PC-3 (cell line): ENCODE measurements at regions of chr12 and their contacts with region 1.

Region 1: GRCh38 chr12:32755654-32756475 is at the start of gene YARS2:
- DNase-seq: peak; percentile 96
- ATAC-seq: peak; percentile 80
- H3K4me3 ChIP-seq: peak within 1 kb of the TSS; percentile 93
- H3K27ac ChIP-seq: peak within 1 kb of the TSS; percentile 85
- H3K4me1 ChIP-seq: peaks cover 22% of the 10 kb centered on the region
- H3K27me3 ChIP-seq: no peaks in the 10 kb centered on the region
- CTCF ChIP-seq: peak; percentile 86
- total RNA-seq, gene YARS2: 31.4 and 37.4 TPM in 2 replicates

Region 2: GRCh38 chr12:31659087-31659933 is 1096.6 kb before region 1 on chr12 and contains the start of gene ETFBKMT:
- CTCF ChIA-PET with region 1: no interaction called
- POLR2A ChIA-PET with region 1: no interaction called
- intact Hi-C with region 1: loop called (anchors 10 kb)
- DNase-seq: peak; percentile 93
- ATAC-seq: peak; percentile 99
- H3K4me3 ChIP-seq: peak within 1 kb of the TSS; percentile 100
- H3K27ac ChIP-seq: peak within 1 kb of the TSS; percentile 72
- H3K4me1 ChIP-seq: peaks cover 8% of the 10 kb centered on the region
- H3K27me3 ChIP-seq: no peaks in the 10 kb centered on the region
- CTCF ChIP-seq: peak; percentile 21; the same call in 1 of the 2 replicates
- total RNA-seq, gene ETFBKMT: 0.52 and 0.58 TPM in 2 replicates

Region 3: DNA sequence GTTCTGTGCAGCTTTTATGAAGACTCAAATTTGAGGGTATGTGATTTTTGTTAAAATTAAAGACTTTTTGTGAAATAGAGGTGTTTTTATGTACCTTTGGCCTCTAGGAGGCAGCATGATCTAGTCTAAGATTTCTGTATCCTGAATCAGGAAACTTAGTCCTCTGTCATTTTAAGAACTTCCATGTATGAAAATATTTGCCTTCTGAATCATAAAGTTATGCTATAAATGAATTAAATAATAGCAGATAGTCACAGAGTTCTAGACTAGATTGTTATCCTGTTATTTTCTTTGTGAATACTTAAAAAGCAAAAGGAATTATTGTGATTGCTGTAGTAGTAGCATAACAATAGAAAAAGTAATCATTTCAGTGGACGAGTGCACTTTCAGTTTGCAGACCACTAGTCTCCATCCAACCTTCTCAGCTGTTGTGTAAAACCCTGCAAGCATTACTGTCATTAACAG is 300.2 kb before region 1 on chr12:
- CTCF ChIA-PET with region 1: no interaction called
- POLR2A ChIA-PET with region 1: no interaction called
- intact Hi-C with region 1: loop called (anchors 1 kb)
- DNase-seq: peak; percentile 81
- ATAC-seq: peak; percentile 66
- H3K4me3 ChIP-seq: peak overlapping the region; percentile 54
- H3K27ac ChIP-seq: no peak overlapping the region
- H3K4me1 ChIP-seq: peaks cover 34% of the 10 kb centered on the region
- H3K27me3 ChIP-seq: no peaks in the 10 kb centered on the region
- CTCF ChIP-seq: peak; percentile 70

Region 4: DNA sequence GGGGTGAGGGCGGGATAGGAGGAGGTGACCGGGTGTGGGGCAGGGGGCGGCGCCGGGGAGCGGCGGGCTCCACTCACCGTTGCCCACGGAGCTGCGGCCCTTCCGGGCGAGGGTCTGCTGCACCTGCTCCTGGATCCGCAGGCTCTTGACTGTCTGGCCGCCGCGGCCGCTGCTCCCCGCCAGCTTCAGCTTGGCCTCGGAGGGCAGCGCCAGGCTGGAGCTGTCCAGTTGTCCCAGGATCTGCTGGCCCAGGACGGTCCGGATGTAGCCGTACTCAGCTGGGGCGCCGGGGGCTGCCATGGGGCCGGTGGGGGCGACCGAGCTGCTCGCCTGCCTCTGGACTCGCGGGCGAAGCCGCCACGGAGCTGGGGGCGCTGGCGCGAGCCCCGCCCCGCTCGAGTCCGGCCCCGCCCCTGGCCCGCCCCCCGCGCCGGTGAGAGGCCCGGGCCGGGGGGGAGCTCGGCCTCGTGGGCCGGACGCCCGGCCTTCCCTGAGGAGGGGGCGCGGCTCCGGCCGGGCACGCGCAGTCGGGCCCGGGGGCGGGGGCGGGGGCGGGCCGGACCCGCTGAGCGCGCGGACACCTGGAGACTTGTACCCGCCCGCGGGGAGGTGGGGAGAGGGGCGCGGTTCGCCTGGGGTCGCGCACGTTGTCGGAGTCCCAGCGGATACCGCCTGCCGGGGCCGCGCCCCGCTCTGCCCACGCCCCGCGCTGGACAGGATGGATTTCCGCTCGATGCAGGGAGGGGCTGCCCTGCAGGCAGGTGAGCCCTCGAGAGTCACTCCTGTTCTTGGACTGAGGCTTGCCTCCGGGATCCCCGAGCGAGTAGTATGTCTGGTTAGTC is 140.8 kb after region 1 on chr12 and contains the start of gene PKP2:
- CTCF ChIA-PET with region 1: interaction called, 6 read pairs
- POLR2A ChIA-PET with region 1: interaction called, 8 read pairs
- intact Hi-C with region 1: loop called (anchors 2 kb)
- DNase-seq: peak; percentile 93
- ATAC-seq: peak; percentile 83
- H3K4me3 ChIP-seq: peak within 1 kb of the TSS; percentile 73
- H3K27ac ChIP-seq: peak within 1 kb of the TSS; percentile 74
- H3K4me1 ChIP-seq: peaks cover 27% of the 10 kb centered on the region
- H3K27me3 ChIP-seq: no peaks in the 10 kb centered on the region
- CTCF ChIP-seq: no peak
- total RNA-seq, gene PKP2: 12.7 TPM in 2 replicates

Region 5: DNA sequence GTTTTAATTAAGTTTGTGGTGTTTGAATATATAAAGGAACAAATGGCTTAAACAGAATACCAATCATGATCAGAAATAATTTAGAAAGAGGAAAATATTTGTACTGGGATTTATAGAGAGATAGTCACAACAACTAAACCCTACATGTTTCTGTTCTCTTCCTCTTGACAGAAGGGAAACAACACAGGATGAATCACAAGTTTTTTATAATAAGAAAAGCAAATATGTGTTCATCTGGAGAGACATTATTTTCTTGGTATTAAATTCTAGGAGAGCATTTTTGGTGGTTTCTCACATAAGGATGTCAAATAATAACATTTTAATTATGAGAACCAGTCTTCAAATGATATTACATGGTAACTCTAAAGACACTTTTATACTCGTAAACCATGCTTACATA is 373.6 kb after region 1 on chr12:
- CTCF ChIA-PET with region 1: no interaction called
- POLR2A ChIA-PET with region 1: no interaction called
- intact Hi-C with region 1: loop called (anchors 10 kb)
- DNase-seq: peak; percentile 51
- ATAC-seq: peak; percentile 94
- H3K4me3 ChIP-seq: no peak overlapping the region
- H3K27ac ChIP-seq: peak overlapping the region; percentile 57
- H3K4me1 ChIP-seq: peaks cover 7% of the 10 kb centered on the region
- H3K27me3 ChIP-seq: no peaks in the 10 kb centered on the region
- CTCF ChIP-seq: no peak

Region 6: DNA sequence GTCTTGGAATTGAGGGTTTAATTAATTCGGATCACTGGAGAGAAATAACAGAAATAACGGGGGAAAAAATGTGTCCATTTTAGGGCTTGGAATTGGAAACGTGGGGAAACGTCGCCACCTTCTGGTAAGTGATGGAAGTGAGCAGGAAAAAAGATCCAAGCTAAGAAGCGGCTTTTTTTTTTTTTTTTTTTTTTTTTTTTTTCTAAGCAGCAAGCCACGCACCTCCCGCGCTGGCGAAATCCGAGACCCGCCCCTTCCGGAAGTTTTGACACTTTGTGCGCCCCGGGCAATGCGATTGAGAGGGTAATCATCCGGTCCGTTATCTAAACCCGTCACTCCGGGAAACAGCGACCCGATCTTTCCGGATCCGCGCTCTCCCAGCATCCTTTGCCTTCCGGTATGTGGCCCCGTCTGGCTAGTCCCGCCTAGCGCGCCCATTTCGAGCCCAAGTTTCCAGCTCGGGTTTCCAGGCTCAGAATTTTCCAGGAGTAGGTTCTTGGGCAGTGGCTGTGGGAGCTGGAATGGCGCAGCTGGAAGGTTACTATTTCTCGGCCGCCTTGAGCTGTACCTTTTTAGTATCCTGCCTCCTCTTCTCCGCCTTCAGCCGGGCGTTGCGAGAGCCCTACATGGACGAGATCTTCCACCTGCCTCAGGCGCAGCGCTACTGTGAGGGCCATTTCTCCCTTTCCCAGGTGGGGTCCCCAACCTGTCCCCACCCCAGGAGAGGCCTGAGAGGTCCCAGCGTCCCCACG is 1266.4 kb after region 1 on chr12 and contains the start of gene ALG10:
- CTCF ChIA-PET with region 1: no interaction called
- POLR2A ChIA-PET with region 1: no interaction called
- intact Hi-C with region 1: loop called (anchors 1 kb)
- DNase-seq: peak; percentile 98
- ATAC-seq: peak; percentile 99
- H3K4me3 ChIP-seq: peak within 1 kb of the TSS; percentile 98
- H3K27ac ChIP-seq: peak within 1 kb of the TSS; percentile 57
- H3K4me1 ChIP-seq: peaks cover 12% of the 10 kb centered on the region; the same call in 1 of the 2 replicates
- H3K27me3 ChIP-seq: no peaks in the 10 kb centered on the region
- CTCF ChIP-seq: peak; percentile 69
- total RNA-seq, gene ALG10: 15.7 TPM in 2 replicates